ENCODE measurements at regions of chr16 and their contacts with region 1.

Region 1: GRCh38 chr16:50202926-50203624 is 50.0 kb downstream of the TENT4B start:
- DNase-seq: no peak
- H3K4me3 ChIP-seq: no peak overlapping the region
- H3K27ac ChIP-seq: peak overlapping the region; percentile 61 to 63
- H3K4me1 ChIP-seq: peaks cover 0 to 76% (median 50%) of the 10 kb centered on the region in 4 donors
- H3K27me3 ChIP-seq: no peaks in the 10 kb centered on the region
- CTCF ChIP-seq: no peak

Region 2: GRCh38 chr16:48918520-48919258 is 1284.4 kb before region 1 on chr16:
- intact Hi-C with region 1: loop called (anchors 5 kb)
- DNase-seq: no peak
- H3K4me3 ChIP-seq: no peak overlapping the region
- H3K27ac ChIP-seq: no peak overlapping the region
- H3K4me1 ChIP-seq: no peaks in the 10 kb centered on the region
- H3K27me3 ChIP-seq: no peaks in the 10 kb centered on the region
- CTCF ChIP-seq: no peak

Region 3: DNA sequence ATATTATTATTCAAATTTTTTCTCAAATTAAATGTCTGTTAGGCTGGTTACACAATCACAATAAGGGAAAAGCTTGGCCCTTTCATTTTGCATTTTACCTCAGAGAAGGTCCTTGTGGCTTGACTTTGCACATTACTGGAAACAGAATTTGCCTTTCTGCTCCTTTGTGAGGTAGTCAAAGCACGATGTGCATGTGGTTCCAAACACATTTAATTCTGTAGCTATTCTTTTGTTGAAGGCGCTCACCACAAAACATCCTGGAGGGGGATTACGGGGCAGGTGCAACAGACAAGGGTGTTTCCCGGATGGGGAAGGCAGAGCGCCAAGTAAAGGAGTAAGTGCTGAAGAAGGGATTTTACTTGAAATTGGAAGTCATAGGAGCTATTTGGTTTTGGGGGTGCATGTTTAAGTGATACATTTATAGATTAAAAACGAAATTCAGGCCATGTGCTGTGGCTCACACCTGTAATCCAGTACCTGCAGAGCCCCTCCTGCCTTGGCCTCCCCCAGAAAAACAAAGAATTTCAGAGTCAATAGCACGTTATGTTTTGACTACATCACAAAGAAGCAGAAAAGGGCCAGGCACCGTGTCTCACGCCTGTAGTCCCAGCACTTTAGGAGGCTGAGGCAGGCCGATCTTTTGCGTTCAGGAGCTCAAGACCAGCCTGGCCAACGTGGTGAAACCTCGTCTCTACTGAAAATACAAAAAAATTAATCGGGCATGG is 81.2 kb before region 1 on chr16:
- intact Hi-C with region 1: no loop called
- DNase-seq: no peak
- H3K4me3 ChIP-seq: no peak overlapping the region
- H3K27ac ChIP-seq: no peak overlapping the region
- H3K4me1 ChIP-seq: no peaks in the 10 kb centered on the region
- H3K27me3 ChIP-seq: no peaks in the 10 kb centered on the region
- CTCF ChIP-seq: no peak

Region 4: GRCh38 chr16:50152807-50153452 is 50.1 kb before region 1 on chr16 and contains the start of gene TENT4B:
- intact Hi-C with region 1: loop called (anchors 5 kb)
- DNase-seq: peak; percentile 79 to 91
- H3K4me3 ChIP-seq: peak within 1 kb of the TSS; percentile 74 to 93
- H3K27ac ChIP-seq: peak within 1 kb of the TSS; percentile 90 to 94
- H3K4me1 ChIP-seq: peaks cover 0 to 33% (median 24%) of the 10 kb centered on the region in 4 donors
- H3K27me3 ChIP-seq: no peaks in the 10 kb centered on the region
- CTCF ChIP-seq: peak in 1 of 2 experiments; percentile 7